Naive thymus-derived CD4-positive, alpha-beta T cell (primary cell): ENCODE measurements at regions of chr20 and their contacts with region 1.

Region 1: DNA sequence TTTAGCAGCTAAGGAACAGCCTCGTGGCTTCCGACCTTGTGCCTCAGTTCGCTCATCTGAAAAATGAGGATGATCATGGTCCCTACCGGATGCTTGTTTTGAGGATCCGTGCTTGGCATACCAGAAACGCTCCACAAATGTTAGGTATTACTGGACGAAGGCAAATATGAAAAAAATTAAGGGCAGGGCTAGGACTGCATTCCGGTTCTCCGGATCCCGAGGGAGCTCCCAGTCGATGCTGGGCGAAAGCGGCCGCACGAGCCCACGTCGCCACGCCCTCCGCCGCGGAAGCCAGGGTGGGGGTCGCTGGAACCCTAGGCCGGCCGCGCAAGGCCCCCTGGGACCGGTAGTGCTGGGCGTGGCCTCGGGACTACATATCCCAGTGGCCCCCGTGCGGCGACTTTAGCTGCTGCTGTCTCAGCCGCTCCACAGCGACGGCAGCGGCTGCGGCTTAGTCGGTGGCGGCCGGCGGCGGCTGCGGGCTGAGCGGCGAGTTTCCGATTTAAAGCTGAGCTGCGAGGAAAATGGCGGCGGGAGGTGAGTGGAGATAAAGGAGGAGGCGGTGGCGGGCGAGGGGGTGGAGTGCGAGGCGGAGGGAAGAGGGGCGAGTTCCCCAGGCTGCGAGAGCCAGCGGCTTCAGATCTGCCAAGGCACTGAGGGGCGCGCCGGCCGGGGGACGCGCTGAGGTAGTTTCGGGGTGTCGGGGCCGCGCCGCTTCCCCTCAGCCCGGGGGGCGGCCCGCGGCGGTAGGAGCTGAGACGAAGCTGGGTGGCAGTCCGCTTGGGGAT is at the start of gene NCOA3:
- DNase-seq: peak; percentile 74 to 94 (median 83)
- ATAC-seq: peak; percentile 95
- H3K4me3 ChIP-seq: peak within 1 kb of the TSS; percentile 86
- H3K4me3 Mint-ChIP-seq: peak within 1 kb of the TSS; percentile 80 to 99 (median 97)
- H3K27ac ChIP-seq: peak within 1 kb of the TSS; percentile 80
- H3K27ac Mint-ChIP-seq: peak within 1 kb of the TSS; percentile 80 to 98 (median 95)
- H3K4me1 ChIP-seq: peaks cover 19 to 28% of the 10 kb centered on the region in 2 donors
- H3K4me1 Mint-ChIP-seq: peaks cover 25 to 48% (median 43%) of the 10 kb centered on the region in 7 donors
- H3K27me3 ChIP-seq: no peaks in the 10 kb centered on the region
- H3K27me3 Mint-ChIP-seq: peaks cover 0 to 2% (median 0%) of the 10 kb centered on the region in 5 donors
- total RNA-seq, gene NCOA3: 75.0 to 115 (median 89.2) TPM

Region 2: GRCh38 chr20:47356526-47357295 is 145.0 kb before region 1 on chr20 and contains the start of gene ZMYND8:
- CTCF ChIA-PET with region 1: no interaction called
- POLR2A ChIA-PET with region 1: interaction called, 25 read pairs
- intact Hi-C with region 1: loop called (anchors 2 to 5 kb)
- DNase-seq: peak; percentile 88 to 100 (median 98)
- ATAC-seq: peak; percentile 91
- H3K4me3 ChIP-seq: peak within 1 kb of the TSS; percentile 75
- H3K4me3 Mint-ChIP-seq: peak within 1 kb of the TSS in 4 of 10 donors; percentile 88 to 95 (median 92)
- H3K27ac ChIP-seq: peak within 1 kb of the TSS; percentile 86
- H3K27ac Mint-ChIP-seq: peak within 1 kb of the TSS in 7 of 9 donors; percentile 97 to 100 (median 99)
- H3K4me1 ChIP-seq: peaks cover 47 to 65% of the 10 kb centered on the region in 2 donors
- H3K4me1 Mint-ChIP-seq: peaks cover 51 to 74% (median 53%) of the 10 kb centered on the region in 7 donors
- H3K27me3 ChIP-seq: no peaks in the 10 kb centered on the region
- H3K27me3 Mint-ChIP-seq: no peaks in the 10 kb centered on the region
- total RNA-seq, gene ZMYND8: 54.5 to 83.0 (median 68.5) TPM

Region 3: DNA sequence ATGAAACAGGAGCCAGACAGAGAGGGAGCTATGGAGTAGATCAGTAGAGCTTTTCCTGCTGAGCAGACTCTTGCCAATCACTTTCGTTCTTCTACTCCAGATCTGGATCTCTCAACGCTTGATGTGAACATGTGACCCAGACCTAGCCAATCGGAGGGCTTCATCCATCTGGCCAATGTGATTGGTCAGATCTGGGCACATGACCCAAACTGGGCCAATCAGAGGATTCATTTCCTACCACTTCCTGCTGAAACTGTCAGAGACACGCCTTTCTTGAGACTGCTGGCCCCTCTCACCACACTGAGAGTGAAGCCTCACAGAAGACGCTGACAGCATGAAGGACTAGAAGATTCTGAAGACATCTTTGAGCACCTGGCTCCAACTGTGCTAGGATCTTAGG is 101.0 kb before region 1 on chr20:
- CTCF ChIA-PET with region 1: no interaction called
- POLR2A ChIA-PET with region 1: no interaction called
- intact Hi-C with region 1: no loop called
- DNase-seq: no peak
- ATAC-seq: no peak
- H3K4me3 ChIP-seq: no peak overlapping the region
- H3K4me3 Mint-ChIP-seq: no peak overlapping the region
- H3K27ac ChIP-seq: no peak overlapping the region
- H3K27ac Mint-ChIP-seq: peak overlapping the region in 1 of 9 donors; percentile 42
- H3K4me1 ChIP-seq: no peaks in the 10 kb centered on the region
- H3K4me1 Mint-ChIP-seq: peaks cover 0 to 10% (median 4%) of the 10 kb centered on the region in 7 donors
- H3K27me3 ChIP-seq: no peaks in the 10 kb centered on the region
- H3K27me3 Mint-ChIP-seq: no peaks in the 10 kb centered on the region

Region 4: DNA sequence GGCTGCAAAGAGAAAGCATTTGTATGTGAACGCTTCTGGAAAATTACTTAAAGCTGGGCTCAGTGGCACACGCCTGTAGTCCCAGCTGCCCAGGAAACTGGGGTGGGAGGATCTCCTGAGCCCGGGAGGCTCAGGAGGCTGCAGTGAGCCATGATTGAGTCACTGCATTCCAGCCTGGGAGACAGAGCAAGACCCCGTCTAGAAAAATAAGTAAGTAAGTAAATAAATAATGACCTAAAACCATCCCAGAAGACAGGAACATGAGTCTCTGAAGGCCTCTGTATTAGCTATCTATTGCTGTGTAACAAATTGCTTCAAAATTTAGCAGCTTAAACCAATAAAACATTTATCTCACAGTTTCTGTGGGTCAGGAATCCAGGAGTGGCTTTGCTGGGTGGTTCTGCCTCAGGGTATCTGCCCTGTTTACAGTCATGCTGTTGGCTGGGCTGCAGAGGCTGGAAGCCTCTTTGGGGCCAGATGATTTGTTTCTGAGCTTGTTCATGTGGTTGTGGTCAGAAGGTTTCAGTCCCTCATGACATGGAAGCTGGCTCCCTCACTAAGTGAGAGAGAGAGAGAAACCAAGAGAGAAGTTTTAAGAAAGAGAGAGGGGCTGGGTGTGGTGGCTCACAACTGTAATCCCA is 48.4 kb before region 1 on chr20:
- CTCF ChIA-PET with region 1: no interaction called
- POLR2A ChIA-PET with region 1: no interaction called
- intact Hi-C with region 1: loop called in 1 of 2 experiments (anchors 5 kb)
- DNase-seq: peak in 1 of 9 donors; percentile 48
- ATAC-seq: no peak
- H3K4me3 ChIP-seq: no peak overlapping the region
- H3K4me3 Mint-ChIP-seq: peak overlapping the region in 1 of 10 donors; percentile 58
- H3K27ac ChIP-seq: no peak overlapping the region
- H3K27ac Mint-ChIP-seq: peak overlapping the region in 1 of 9 donors; percentile 85
- H3K4me1 ChIP-seq: no peaks in the 10 kb centered on the region
- H3K4me1 Mint-ChIP-seq: peaks cover 0 to 46% (median 0%) of the 10 kb centered on the region in 7 donors
- H3K27me3 ChIP-seq: no peaks in the 10 kb centered on the region
- H3K27me3 Mint-ChIP-seq: peaks cover 0 to 2% (median 0%) of the 10 kb centered on the region in 5 donors

Region 5: DNA sequence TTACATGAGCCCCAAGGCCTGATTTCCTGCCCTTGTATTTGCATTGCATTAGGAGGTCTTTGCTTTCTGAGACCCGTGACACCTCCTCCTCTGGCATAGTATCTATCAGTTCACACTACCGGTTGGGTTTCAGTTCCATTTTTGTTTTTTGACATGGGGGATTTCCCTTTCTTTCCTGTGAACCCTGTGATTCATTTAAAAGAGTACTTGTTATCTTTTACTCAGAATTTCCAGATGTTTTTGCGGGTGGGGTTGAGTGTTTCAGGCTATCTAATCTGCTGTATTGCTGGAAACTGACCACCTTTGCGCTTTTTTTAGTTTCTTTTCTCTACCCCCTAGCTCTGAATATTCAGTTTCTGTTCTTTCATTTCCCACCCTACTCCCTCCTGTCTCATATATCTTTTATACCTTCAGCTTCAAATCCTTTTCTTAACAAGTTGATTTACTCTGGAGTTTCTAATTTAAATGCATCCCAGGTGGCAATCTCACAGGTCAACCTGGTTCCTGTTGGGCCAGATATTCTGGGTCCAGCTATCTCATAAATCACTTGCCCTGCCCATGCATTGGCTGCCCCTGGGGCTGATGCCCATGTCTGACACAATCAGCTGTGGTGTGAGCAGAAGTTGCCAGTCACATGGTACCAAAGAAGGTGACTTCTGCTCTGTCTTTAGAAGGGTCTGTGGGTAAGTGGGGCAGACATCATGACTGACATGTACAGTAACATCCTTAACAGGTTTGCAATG is 14.3 kb before region 1 on chr20:
- CTCF ChIA-PET with region 1: no interaction called
- POLR2A ChIA-PET with region 1: interaction called, 39 read pairs
- intact Hi-C with region 1: loop called (anchors 1 kb)
- DNase-seq: peak in 8 of 9 donors; percentile 38 to 84 (median 62)
- ATAC-seq: peak; percentile 89
- H3K4me3 ChIP-seq: peak overlapping the region; percentile 14
- H3K4me3 Mint-ChIP-seq: peak overlapping the region in 9 of 10 donors; percentile 14 to 74 (median 56)
- H3K27ac ChIP-seq: peak overlapping the region; percentile 56
- H3K27ac Mint-ChIP-seq: peak overlapping the region; percentile 56 to 97 (median 84)
- H3K4me1 ChIP-seq: peaks cover 10 to 14% of the 10 kb centered on the region in 2 donors
- H3K4me1 Mint-ChIP-seq: peaks cover 17 to 66% (median 32%) of the 10 kb centered on the region in 7 donors
- H3K27me3 ChIP-seq: no peaks in the 10 kb centered on the region
- H3K27me3 Mint-ChIP-seq: no peaks in the 10 kb centered on the region

Region 6: DNA sequence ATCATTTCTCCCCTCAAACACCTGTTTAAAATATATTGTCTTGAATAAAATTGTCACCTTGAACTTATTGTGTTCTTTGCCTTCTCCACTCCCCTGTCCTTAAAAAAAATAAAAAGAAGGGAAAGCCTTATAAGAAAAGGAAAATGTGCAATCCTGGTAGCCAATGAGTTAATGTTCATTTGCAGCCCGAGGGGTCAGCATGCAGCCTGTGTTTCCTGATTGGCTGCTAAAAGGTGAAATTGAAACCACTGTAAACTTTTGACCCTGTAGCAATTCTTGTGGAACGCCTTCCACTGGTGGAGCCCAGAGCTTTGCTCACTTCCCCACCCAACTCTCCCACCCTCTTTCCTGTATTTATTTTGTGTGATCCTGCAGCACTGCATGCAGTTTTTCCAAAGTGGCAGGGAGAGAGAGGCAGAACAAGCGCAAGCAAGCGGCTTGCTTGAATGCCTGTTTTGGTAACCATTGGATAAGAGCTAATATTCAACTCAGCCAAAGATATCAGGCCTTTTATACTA is 74.9 kb after region 1 on chr20:
- CTCF ChIA-PET with region 1: no interaction called
- POLR2A ChIA-PET with region 1: interaction called, 4 read pairs
- intact Hi-C with region 1: loop called in 1 of 2 experiments (anchors 5 kb)
- DNase-seq: no peak
- ATAC-seq: peak; percentile 61
- H3K4me3 ChIP-seq: no peak overlapping the region
- H3K4me3 Mint-ChIP-seq: peak overlapping the region; percentile 8 to 58 (median 36)
- H3K27ac ChIP-seq: no peak overlapping the region
- H3K27ac Mint-ChIP-seq: peak overlapping the region in 8 of 9 donors; percentile 6 to 67 (median 30)
- H3K4me1 ChIP-seq: peaks cover 23 to 32% of the 10 kb centered on the region in 2 donors
- H3K4me1 Mint-ChIP-seq: peaks cover 67 to 95% (median 90%) of the 10 kb centered on the region in 7 donors
- H3K27me3 ChIP-seq: no peaks in the 10 kb centered on the region
- H3K27me3 Mint-ChIP-seq: no peaks in the 10 kb centered on the region

Region 7: DNA sequence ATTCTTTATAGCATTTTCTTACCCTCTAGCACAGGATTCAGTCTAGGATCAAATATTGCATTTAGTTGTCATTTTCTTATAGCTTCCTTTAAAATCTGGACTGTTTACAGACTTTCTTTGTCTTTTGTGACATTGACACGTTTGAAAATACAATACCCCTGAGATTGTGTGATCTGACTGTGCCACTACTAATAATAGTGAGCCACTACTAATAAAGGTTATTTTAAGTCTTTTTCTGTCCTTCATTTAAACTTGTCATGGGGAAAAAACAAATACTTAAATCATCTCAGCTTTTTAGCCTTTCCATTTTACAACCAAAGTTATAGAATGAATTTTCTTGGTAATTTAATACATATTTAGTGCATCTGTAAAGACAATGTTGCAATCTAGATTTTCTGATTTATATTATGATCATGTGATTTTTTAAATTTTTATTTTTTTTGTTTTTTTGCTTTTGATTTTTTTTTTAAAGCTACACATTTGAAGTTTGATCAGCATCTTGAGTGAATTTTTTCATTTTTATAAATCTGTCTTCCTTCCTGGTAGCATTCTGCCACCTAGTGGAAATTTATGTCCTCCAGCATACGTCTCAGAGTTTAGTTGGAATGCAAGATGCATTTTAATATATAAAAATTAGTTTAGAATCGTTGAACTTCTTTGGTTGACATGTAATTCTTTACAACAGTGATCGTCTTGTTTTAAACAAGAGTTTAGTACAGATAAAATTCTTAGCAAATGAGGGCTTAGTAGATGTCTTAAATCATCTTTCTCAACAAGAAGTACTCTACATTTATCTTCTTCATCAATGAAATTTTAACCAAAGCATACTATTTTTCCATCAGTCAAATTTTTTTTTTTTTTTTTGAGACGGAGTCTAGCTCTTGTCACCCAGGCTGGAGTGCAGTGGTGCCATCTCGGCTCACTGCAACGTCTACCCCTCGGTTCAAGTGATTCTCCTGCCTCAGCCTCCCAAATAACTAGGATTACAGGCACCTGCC is 119.4 kb after region 1 on chr20:
- CTCF ChIA-PET with region 1: no interaction called
- POLR2A ChIA-PET with region 1: no interaction called
- intact Hi-C with region 1: loop called in 1 of 2 experiments (anchors 1 kb)
- DNase-seq: peak in 7 of 9 donors; percentile 18 to 61 (median 43)
- ATAC-seq: peak; percentile 58
- H3K4me3 ChIP-seq: no peak overlapping the region
- H3K4me3 Mint-ChIP-seq: no peak overlapping the region
- H3K27ac ChIP-seq: no peak overlapping the region
- H3K27ac Mint-ChIP-seq: peak overlapping the region in 6 of 9 donors; percentile 2 to 44 (median 10)
- H3K4me1 ChIP-seq: no peaks in the 10 kb centered on the region
- H3K4me1 Mint-ChIP-seq: peaks cover 6 to 52% (median 23%) of the 10 kb centered on the region in 7 donors
- H3K27me3 ChIP-seq: no peaks in the 10 kb centered on the region
- H3K27me3 Mint-ChIP-seq: no peaks in the 10 kb centered on the region

Region 8: DNA sequence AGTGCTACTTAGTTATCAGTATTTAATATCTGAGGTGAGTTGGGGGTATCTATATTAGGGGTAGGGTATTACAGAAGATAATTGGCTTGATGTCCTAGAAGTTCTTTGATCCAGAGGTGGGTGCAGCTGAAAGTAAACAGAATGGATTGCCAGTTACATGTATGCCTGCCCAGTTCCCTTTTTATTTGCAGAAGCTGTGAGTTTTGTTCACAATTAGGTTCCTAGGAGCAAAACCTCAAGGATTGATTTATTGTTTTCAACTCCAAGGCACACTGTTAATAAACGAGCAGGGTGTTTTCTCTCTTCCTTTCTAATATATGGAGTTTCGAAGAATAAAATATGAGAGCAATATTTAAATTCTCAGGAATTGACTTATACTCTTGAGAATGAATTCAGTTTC is 154.6 kb after region 1 on chr20:
- CTCF ChIA-PET with region 1: no interaction called
- POLR2A ChIA-PET with region 1: no interaction called
- intact Hi-C with region 1: no loop called
- DNase-seq: no peak
- ATAC-seq: no peak
- H3K4me3 ChIP-seq: no peak overlapping the region
- H3K4me3 Mint-ChIP-seq: no peak overlapping the region
- H3K27ac ChIP-seq: peak overlapping the region; percentile 4
- H3K27ac Mint-ChIP-seq: peak overlapping the region in 2 of 9 donors; percentile 23 to 24
- H3K4me1 ChIP-seq: no peaks in the 10 kb centered on the region
- H3K4me1 Mint-ChIP-seq: peaks cover 0 to 2% (median 0%) of the 10 kb centered on the region in 7 donors
- H3K27me3 ChIP-seq: no peaks in the 10 kb centered on the region
- H3K27me3 Mint-ChIP-seq: no peaks in the 10 kb centered on the region